GM13977 (cell line): ENCODE measurements at regions of chr7 and their contacts with region 1.

Region 1: GRCh38 chr7:80060218-80060806 is 74.3 kb upstream of the GNAI1 start:
- DNase-seq: peak; percentile 32
- CTCF ChIP-seq: peak; percentile 15

Region 2: DNA sequence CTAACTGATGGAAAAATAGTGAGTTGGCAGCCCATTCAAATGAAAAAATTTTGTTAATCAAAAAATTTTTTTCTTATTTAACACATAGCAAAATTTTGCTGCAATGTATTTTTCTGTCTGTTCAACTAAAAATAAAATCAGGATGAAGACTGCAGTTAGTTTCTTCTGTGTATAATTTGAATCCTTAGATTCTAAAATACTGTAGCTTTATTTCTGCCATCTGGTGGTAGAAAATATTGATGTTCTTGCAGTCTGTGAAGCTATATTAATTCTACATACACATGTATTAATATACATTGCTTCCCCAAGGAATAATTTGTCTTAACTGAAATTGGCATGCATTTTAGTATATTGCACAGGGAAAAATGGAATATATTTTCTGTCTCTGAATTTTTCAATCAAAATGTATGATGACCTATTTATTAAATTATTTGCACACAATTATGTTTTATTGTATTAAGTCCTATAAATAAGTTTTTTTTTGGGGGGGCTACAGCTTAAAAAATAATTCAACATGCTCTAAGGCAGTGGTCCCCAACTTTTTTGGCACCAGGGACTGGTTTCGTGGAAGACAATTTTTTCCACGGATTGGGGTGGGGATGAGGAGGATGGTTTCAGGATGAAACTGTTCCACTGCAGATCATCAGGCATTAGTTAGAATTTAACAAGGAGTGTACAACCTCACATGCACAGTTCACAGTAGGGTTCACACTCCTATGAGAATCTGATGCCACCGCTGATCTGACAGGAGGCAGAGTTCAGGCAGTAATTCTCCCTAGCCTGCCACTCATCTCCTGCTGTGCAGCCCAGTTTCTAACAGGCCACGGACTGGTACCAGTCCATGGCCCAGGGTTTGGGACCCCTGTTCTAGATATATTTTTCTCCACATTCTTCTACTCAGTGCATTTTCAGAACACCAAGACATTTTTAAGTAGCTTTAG is 332.2 kb after region 1 on chr7:
- in situ Hi-C with region 1: loop called (anchors 25 kb)
- DNase-seq: no peak
- CTCF ChIP-seq: peak; percentile 16